ENCODE measurements at regions of chr20 and their contacts with region 1.

Region 1: DNA sequence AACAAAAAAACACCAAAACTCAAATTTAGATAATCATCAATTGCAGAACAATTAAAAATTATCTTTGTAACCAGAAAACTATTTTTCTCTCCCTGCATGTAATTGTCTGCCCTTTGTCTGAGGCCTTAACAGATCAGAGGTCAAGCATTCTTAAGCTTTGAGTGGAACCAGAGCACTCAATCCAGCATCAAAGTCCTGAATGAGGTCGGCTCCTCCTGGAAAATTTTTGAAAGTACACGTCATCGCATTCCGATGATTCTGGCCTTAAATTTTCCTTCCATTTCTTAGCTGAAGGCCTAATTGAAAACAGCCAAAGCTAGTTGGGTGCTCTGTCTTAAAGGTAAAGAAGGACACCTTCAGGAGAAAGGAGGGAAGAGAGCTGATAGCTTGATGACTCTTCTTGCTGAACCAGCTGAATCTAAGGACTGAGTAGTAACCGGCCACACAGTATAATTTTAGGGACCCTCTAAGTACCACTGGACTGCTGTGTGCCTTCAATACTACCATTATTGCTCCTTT is 510.2 kb upstream of the SULF2 start:
- DNase-seq: no peak
- H3K4me3 ChIP-seq: no peak overlapping the region
- H3K27ac ChIP-seq: no peak overlapping the region
- H3K4me1 ChIP-seq: peaks cover 32% of the 10 kb centered on the region
- H3K27me3 ChIP-seq: no peaks in the 10 kb centered on the region
- CTCF ChIP-seq: peak; percentile 44 to 65 (median 56)

Region 2: GRCh38 chr20:47785854-47786764 is 509.4 kb before region 1 on chr20:
- dilution Hi-C with region 1: loop called (anchors 25 kb)
- DNase-seq: no peak
- H3K4me3 ChIP-seq: peak overlapping the region; percentile 57 to 76 (median 75)
- H3K27ac ChIP-seq: peak overlapping the region; percentile 82
- H3K4me1 ChIP-seq: peaks cover 37% of the 10 kb centered on the region
- H3K27me3 ChIP-seq: no peaks in the 10 kb centered on the region
- CTCF ChIP-seq: peak; percentile 64 to 89 (median 79)

Region 3: DNA sequence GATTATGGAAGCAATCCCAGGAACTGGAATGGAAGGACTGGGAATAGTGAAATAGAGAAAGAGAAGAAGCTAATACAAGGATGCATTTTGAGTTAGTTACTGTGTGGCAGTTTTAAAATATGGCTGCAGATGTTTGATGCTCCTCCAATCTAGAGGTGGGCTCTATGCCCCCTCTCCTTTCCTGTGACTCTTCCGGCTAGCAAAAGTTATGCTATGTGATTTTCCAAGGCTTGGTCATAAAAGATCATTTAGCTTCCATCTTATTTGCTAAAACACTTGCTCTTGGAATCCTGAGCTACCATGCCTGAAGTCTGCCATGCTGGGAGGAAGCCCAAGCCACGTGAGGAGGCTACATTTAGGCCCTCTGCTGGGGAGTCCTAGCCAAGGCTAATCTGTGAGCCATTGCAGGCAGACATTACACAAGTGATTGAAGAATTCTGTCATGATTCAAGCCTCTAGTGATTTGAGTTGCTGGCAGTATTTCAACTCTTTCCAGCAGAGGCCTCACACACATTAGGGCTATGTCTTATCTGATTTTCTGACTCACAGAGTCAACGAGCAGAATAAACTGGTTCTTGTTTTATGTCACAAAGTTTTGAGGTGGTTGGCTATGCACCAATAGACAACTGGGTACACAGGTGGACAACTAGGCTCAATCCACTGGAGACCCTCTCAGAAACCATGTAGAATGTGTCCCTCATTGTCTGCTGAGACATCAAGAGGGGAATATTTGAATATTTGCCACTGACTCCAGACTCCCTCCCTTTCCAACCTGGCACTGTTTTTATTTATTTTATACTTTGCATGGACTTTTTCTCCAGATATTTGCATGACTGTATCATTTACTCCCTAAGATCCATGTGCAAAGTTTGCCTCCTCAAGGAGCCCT is 283.1 kb before region 1 on chr20:
- dilution Hi-C with region 1: loop called (anchors 10 kb)
- DNase-seq: no peak
- H3K4me3 ChIP-seq: no peak overlapping the region
- H3K27ac ChIP-seq: no peak overlapping the region
- H3K4me1 ChIP-seq: no peaks in the 10 kb centered on the region
- H3K27me3 ChIP-seq: peaks cover 3% of the 10 kb centered on the region
- CTCF ChIP-seq: peak; percentile 38 to 68 (median 49)

Region 4: DNA sequence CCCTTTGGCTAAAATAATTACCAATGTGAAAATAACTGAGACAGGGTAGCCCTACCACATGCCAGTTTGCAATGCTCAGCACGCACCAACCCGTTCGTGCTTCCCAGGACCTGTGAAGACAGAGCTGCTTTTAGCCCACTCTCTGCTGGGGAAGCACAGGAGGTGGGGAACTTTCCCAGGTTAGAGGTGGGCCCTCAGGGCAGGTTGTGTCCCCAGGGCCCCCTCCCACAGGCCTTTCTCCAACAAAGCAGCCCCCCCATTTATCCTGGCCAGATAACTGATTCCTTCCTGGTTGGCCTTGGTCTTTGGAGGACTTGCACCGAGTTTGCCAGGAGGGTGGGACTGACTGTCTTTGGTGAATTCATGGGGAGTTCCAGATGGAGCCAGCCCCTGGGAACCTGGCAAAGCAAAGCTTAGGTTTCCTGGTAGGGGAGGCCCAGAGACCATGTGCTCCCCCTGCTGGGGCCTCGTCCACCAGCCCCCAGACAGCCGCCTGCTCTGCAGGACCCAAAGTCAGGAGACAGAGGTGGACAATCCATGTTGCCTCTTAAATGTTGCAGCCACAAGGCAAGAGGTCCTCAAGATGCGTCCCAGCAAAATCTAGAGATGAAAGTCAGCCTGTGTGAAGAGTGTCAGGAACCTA is 34.3 kb after region 1 on chr20:
- dilution Hi-C with region 1: no loop called
- DNase-seq: no peak
- H3K4me3 ChIP-seq: no peak overlapping the region
- H3K27ac ChIP-seq: no peak overlapping the region
- H3K4me1 ChIP-seq: no peaks in the 10 kb centered on the region
- H3K27me3 ChIP-seq: peaks cover 23% of the 10 kb centered on the region
- CTCF ChIP-seq: peak in 2 of 3 experiments; percentile 13 to 22

Region 5: DNA sequence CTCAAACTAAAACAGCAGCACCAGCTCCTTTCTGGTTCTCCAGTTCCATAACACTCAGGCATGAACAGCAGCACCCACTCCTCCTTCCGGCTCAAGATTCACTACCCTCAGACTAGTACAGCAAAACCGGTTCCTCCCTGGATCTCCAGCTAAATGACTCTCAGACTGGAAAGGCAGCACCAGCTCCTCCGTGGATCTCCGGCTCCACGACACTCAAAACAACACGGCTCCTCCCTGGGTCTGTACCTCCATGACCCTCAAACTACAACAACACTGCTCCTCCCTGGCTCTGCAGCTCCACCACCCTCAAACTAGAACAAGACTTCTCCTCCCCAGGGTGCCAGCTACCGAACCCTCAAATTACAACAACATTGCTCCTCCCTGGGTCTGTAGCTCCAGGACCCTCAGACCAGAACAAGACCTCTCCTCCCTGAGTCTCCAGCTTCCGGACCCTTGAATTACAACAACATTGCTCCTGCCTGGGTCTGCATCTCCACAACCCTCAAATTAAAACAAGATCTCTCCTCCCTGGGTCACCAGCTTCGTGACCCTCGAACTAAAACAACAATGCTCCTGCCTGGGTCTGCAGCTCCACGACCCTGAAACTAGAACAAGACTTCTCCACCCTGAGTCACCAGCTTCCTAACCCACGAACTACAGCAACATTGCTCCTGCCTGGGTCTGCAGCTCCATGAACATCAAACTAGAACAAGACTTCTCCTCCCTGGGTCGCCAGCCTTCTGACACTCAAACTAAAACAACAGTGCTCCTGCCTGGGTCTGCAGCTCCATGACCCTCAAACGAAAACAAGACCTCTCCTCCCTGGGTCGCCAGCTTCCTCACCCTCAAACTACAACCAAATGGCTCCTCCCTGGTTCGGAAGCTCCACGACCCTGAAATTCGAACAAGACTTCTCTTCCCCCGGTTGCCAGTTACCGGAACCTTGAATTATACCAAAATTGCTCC is 207.6 kb after region 1 on chr20:
- dilution Hi-C with region 1: no loop called
- DNase-seq: no peak
- H3K4me3 ChIP-seq: no peak overlapping the region
- H3K27ac ChIP-seq: no peak overlapping the region
- H3K4me1 ChIP-seq: no peaks in the 10 kb centered on the region
- H3K27me3 ChIP-seq: no peaks in the 10 kb centered on the region
- CTCF ChIP-seq: no peak